Right lobe of liver (tissue), 6 donors: ENCODE measurements at regions of chr22 and their contacts with region 1.

Region 1: GRCh38 chr22:33920927-33921524 is 750 bp upstream of the LARGE1 start:
- DNase-seq: peak; percentile 99
- ATAC-seq: peak; percentile 83 to 91 (median 89)
- H3K4me3 ChIP-seq: peak overlapping the region; percentile 45 to 78 (median 65)
- H3K27ac ChIP-seq: peak overlapping the region in 2 of 3 donors; percentile 67 to 73
- H3K4me1 ChIP-seq: peaks cover 0 to 13% (median 3%) of the 10 kb centered on the region in 4 donors
- H3K27me3 ChIP-seq: no peaks in the 10 kb centered on the region
- CTCF ChIP-seq: no peak
- POLR2A ChIP-seq: peak; percentile 96

Region 2: DNA sequence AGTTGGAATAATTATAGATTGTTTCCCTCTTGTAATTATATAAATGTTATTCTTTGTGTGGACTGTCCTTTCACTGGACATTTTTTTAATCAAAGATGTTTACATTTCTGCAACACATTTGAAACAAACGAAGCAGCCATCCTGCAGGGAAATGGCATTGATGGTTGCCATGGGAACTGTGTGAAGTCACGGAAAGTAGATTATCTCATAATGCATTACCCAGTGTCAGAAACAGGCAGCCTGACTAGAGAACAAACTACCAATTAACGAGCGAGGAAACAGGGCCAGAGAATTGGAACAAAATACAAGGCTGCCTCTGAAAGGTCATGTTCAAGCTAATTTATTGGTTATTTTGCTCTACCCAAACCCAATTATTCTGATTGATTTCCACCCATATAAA is 96.2 kb after region 1 on chr22:
- intact Hi-C with region 1: loop called in 1 of 2 experiments (anchors 10 kb)
- DNase-seq: no peak
- ATAC-seq: no peak
- H3K4me3 ChIP-seq: no peak overlapping the region
- H3K27ac ChIP-seq: no peak overlapping the region
- H3K4me1 ChIP-seq: no peaks in the 10 kb centered on the region
- H3K27me3 ChIP-seq: no peaks in the 10 kb centered on the region
- CTCF ChIP-seq: no peak
- POLR2A ChIP-seq: no peak

Region 3: GRCh38 chr22:34036931-34037330 is 115.9 kb after region 1 on chr22:
- intact Hi-C with region 1: no loop called
- DNase-seq: no peak
- ATAC-seq: no peak
- H3K4me3 ChIP-seq: no peak overlapping the region
- H3K27ac ChIP-seq: no peak overlapping the region
- H3K4me1 ChIP-seq: no peaks in the 10 kb centered on the region
- H3K27me3 ChIP-seq: no peaks in the 10 kb centered on the region
- CTCF ChIP-seq: no peak
- POLR2A ChIP-seq: no peak